MCF 10A (cell line): ENCODE measurements at regions of chr5 and their contacts with region 1.

Region 1: DNA sequence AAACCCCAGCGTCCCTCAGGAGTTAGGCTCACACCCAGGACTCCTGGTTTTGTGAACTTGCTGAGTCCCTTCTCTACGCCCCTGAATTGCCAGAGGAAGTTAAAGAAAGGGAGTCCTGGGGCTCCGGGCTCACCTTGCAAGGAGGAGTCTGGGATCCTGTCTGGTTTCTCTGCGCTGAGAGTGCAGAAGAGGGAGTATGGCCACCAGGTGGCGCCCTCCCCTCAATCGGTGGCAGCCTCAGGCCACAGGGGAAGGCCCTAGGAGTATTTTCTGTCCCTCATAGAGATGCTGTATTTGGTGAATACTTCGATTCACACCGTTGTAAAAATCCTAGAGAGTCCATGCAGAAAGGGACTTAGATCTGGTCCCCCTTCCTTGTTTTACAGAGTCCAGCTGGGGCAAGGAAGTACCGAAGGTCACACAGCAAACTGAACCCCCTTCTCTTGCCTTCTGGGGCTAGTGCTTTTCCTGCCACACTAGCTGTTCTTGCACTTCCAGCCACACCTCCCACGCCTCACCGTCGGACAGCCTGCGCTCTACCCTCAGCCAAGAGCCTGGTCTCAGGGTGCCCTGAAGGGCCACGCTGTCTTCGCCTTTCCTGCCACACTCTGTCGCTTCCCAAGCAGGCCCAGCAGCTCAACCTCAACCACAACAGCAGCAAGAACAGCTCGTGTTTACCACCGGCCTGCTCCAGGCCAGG is 10.2 kb downstream of the HAND1 start:
- DNase-seq: peak; percentile 83
- H3K4me3 Mint-ChIP-seq: no peak overlapping the region
- H3K27ac Mint-ChIP-seq: no peak overlapping the region
- H3K4me1 Mint-ChIP-seq: peaks cover 14% of the 10 kb centered on the region
- H3K27me3 Mint-ChIP-seq: peaks cover 24% of the 10 kb centered on the region
- CTCF ChIP-seq: peak; percentile 96

Region 2: DNA sequence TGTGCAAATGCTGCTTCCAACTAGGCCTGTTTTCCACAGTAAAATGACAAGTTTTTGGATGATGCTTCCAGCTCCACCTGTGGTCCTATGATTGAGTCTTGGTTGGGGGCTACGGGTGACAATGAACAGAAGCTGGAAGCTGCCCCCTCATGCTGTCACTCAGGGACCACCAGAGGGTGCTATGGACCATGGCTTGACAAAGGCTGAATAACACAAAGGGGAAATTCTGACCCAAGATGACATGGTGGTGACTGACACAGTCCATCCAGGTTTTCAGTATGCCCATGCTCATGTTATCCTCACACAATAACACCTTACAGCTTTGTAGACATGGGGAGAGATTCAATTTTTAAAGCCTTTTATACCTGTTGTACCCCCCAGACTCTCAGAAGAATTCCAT is 45.9 kb before region 1 on chr5:
- CTCF ChIA-PET with region 1: interaction called, 12 read pairs
- POLR2A ChIA-PET with region 1: no interaction called
- intact Hi-C with region 1: no loop called
- DNase-seq: peak; percentile 45
- H3K4me3 Mint-ChIP-seq: no peak overlapping the region
- H3K27ac Mint-ChIP-seq: no peak overlapping the region
- H3K4me1 Mint-ChIP-seq: no peaks in the 10 kb centered on the region
- H3K27me3 Mint-ChIP-seq: no peaks in the 10 kb centered on the region
- CTCF ChIP-seq: peak; percentile 24

Region 3: GRCh38 chr5:154445422-154446182 is 22.2 kb before region 1 on chr5 and contains the start of gene SAP30L:
- CTCF ChIA-PET with region 1: interaction called, 52 read pairs
- POLR2A ChIA-PET with region 1: interaction called, 11 read pairs
- intact Hi-C with region 1: loop called (anchors 1 kb)
- DNase-seq: peak; percentile 98
- H3K4me3 Mint-ChIP-seq: peak within 1 kb of the TSS; percentile 99
- H3K27ac Mint-ChIP-seq: peak within 1 kb of the TSS; percentile 90
- H3K4me1 Mint-ChIP-seq: peaks cover 47% of the 10 kb centered on the region
- H3K27me3 Mint-ChIP-seq: no peaks in the 10 kb centered on the region
- CTCF ChIP-seq: no peak
- total RNA-seq, gene SAP30L: 45.9 and 50.5 TPM in 2 replicates

Region 4: DNA sequence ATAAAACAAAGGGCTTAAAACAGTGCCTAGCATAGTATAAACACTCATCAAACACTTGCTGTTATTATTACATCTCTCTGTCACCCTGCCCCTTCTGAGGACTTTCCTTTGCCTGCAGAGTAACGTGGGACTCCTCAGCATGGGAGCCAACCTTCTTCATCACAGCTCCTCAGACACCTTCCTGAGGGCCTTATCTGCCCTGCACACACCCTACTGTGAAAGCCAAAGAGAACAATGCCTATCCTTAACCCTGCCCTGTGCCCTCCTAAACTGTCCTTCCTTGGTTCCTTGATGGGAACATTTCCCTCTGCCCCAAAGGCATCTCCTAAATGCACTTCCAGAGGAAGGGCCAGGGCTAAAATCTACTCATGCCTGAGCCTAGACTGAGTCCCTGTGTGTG is 30.8 kb after region 1 on chr5:
- CTCF ChIA-PET with region 1: interaction called, 24 read pairs
- POLR2A ChIA-PET with region 1: no interaction called
- intact Hi-C with region 1: no loop called
- DNase-seq: no peak
- H3K4me3 Mint-ChIP-seq: no peak overlapping the region
- H3K27ac Mint-ChIP-seq: no peak overlapping the region
- H3K4me1 Mint-ChIP-seq: no peaks in the 10 kb centered on the region
- H3K27me3 Mint-ChIP-seq: peaks cover 46% of the 10 kb centered on the region
- CTCF ChIP-seq: no peak

Region 5: GRCh38 chr5:154610321-154611154 is 142.7 kb after region 1 on chr5:
- CTCF ChIA-PET with region 1: interaction called, 351 read pairs
- POLR2A ChIA-PET with region 1: interaction called, 5 read pairs
- intact Hi-C with region 1: loop called (anchors 1 kb)
- DNase-seq: peak; percentile 90
- H3K4me3 Mint-ChIP-seq: peak overlapping the region; percentile 54
- H3K27ac Mint-ChIP-seq: no peak overlapping the region
- H3K4me1 Mint-ChIP-seq: peaks cover 10% of the 10 kb centered on the region
- H3K27me3 Mint-ChIP-seq: peaks cover 39% of the 10 kb centered on the region
- CTCF ChIP-seq: peak; percentile 100